CD4-positive, alpha-beta memory T cell (primary cell): ENCODE measurements at regions of chr16 and their contacts with region 1.

Region 1: GRCh38 chr16:9090960-9091866 is at the start of gene HAPSTR1:
- DNase-seq: peak; percentile 97 to 100 (median 100)
- H3K4me3 ChIP-seq: peak within 1 kb of the TSS; percentile 69 to 98
- H3K4me3 Mint-ChIP-seq: peak within 1 kb of the TSS; percentile 96 to 100 (median 99)
- H3K27ac ChIP-seq: peak within 1 kb of the TSS; percentile 93
- H3K27ac Mint-ChIP-seq: peak within 1 kb of the TSS; percentile 96 to 99 (median 98)
- H3K4me1 ChIP-seq: peaks cover 43% of the 10 kb centered on the region
- H3K4me1 Mint-ChIP-seq: peaks cover 30 to 53% (median 35%) of the 10 kb centered on the region in 4 donors
- H3K27me3 ChIP-seq: no peaks in the 10 kb centered on the region
- H3K27me3 Mint-ChIP-seq: no peaks in the 10 kb centered on the region
- total RNA-seq, gene HAPSTR1: 89.6 to 90.5 TPM

Region 2: DNA sequence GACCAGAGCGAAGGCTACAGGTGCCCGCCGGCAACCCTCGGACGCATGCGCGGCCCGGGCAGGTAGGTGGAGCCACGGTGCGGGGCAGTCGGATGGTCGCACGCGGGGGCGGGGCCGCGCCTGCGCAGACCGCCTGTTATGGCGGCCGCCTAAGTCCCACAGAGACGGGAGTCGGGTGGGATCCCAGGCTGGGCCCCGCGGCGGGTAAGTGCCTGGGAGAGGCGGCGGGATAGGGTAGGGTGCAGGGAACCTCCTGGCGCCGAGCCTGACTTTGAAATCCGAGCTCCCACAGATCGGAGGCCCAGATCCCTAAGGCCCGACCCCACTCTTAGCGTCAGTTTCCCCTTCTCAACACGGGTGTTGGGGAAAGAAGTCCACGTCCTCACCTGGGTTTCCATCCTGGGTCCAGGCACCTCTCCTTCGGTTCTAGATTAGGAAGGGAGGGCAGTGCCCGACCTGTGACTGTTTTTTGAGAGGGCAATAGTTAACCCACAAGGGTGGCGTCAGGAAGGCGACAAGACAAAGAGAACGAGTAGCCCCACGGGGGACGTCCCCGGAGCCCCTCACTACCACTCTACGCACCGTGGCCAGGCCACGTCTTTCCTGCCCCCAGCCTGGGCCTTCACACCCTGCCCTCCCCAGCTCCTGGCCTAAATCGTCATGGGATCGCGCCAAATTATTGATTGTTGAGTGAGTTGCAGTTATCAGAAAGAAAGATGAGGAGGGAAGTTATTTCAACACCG is 469.5 kb before region 1 on chr16 and contains the start of gene METTL22:
- CTCF ChIA-PET with region 1: no interaction called
- POLR2A ChIA-PET with region 1: interaction called, 5 read pairs
- intact Hi-C with region 1: loop called (anchors 10 kb)
- DNase-seq: peak; percentile 87 to 90 (median 90)
- H3K4me3 ChIP-seq: peak within 1 kb of the TSS; percentile 71 to 96
- H3K4me3 Mint-ChIP-seq: peak within 1 kb of the TSS; percentile 89 to 98 (median 94)
- H3K27ac ChIP-seq: peak within 1 kb of the TSS; percentile 92
- H3K27ac Mint-ChIP-seq: peak within 1 kb of the TSS; percentile 77 to 94 (median 91)
- H3K4me1 ChIP-seq: peaks cover 15% of the 10 kb centered on the region
- H3K4me1 Mint-ChIP-seq: peaks cover 11 to 32% (median 15%) of the 10 kb centered on the region in 4 donors
- H3K27me3 ChIP-seq: no peaks in the 10 kb centered on the region
- H3K27me3 Mint-ChIP-seq: peaks cover 0 to 5% of the 10 kb centered on the region in 2 donors
- total RNA-seq, gene METTL22: 42.9 to 49.8 TPM

Region 3: DNA sequence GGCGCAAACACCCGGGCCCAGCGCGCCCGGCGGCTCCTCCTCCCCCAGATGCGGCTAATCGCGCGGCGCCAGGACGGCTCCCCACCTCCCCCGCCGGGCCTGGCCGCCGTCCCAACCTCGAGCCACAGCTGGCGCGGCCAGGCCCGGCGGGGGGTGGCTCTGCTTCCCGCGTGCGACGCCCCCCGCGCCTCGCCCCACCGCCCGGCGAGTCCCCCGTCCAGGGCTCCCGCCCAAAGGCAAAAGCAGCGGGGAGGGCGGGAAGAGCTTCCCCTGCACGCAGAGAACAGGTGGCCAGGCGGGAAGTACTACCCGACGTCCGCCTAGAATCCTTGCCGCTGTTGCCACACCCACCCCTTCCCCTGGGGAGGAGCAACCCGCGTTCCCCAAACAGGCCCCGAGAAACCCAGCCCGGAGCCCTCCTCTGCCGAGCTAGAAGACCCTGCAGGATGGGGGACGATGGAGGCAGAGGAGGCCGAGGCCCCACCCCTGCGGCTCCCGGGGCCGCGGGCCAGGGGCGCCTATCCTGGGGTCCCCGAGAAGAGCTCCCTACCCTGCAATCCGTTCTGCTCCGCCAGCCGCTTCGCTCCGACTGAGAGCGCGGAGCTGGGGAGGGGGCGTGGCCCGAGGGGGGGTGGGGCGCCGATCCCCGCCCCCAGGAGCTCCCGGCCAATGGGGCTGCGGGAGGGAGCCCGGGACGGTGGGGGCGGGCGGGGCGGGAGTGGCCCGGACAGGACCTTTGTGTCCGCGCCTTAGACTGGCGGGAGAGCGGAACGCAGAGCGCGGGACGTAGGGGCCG is 222.6 kb before region 1 on chr16 and contains the start of gene CARHSP1:
- CTCF ChIA-PET with region 1: no interaction called
- POLR2A ChIA-PET with region 1: interaction called, 36 read pairs
- intact Hi-C with region 1: loop called (anchors 1 kb)
- DNase-seq: peak; percentile 71 to 80 (median 77)
- H3K4me3 ChIP-seq: peak within 1 kb of the TSS; percentile 54 to 81
- H3K4me3 Mint-ChIP-seq: peak within 1 kb of the TSS; percentile 93 to 97 (median 94)
- H3K27ac ChIP-seq: peak within 1 kb of the TSS; percentile 54
- H3K27ac Mint-ChIP-seq: peak within 1 kb of the TSS; percentile 85 to 97 (median 93)
- H3K4me1 ChIP-seq: peaks cover 54% of the 10 kb centered on the region
- H3K4me1 Mint-ChIP-seq: peaks cover 25 to 57% (median 45%) of the 10 kb centered on the region in 4 donors
- H3K27me3 ChIP-seq: no peaks in the 10 kb centered on the region
- H3K27me3 Mint-ChIP-seq: no peaks in the 10 kb centered on the region
- total RNA-seq, gene CARHSP1: 39.3 to 43.2 TPM

Region 4: GRCh38 chr16:8963825-8964441 is 127.3 kb before region 1 on chr16 and contains the start of gene USP7:
- CTCF ChIA-PET with region 1: no interaction called
- POLR2A ChIA-PET with region 1: interaction called, 21 read pairs
- intact Hi-C with region 1: loop called (anchors 1 kb)
- DNase-seq: peak; percentile 91 to 92 (median 91)
- H3K4me3 ChIP-seq: peak within 1 kb of the TSS; percentile 51 to 67
- H3K4me3 Mint-ChIP-seq: peak within 1 kb of the TSS; percentile 86 to 98 (median 94)
- H3K27ac ChIP-seq: peak within 1 kb of the TSS; percentile 65
- H3K27ac Mint-ChIP-seq: peak within 1 kb of the TSS; percentile 6 to 98 (median 82)
- H3K4me1 ChIP-seq: peaks cover 38% of the 10 kb centered on the region
- H3K4me1 Mint-ChIP-seq: peaks cover 32 to 47% (median 37%) of the 10 kb centered on the region in 4 donors
- H3K27me3 ChIP-seq: no peaks in the 10 kb centered on the region
- H3K27me3 Mint-ChIP-seq: no peaks in the 10 kb centered on the region
- total RNA-seq, gene USP7: 194 to 206 TPM

Region 5: DNA sequence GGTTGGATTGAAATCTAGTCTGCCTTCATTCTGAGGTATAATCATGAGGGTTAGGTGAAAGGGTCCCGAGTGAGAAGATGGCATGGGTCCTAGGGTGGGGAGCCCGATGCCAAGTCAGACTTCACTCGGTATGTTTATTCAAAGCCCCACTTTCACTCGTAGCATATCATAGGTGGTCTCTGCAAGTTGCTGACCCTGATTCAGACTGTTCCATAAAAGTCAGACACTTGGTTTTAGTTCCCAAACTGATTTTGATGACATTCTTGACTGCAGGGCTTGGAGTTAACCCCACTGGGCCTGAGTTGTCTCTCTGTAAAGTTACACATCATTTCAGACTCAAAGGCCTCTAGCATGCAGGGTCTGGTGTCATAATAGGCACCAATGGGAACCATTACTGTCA is 18.0 kb after region 1 on chr16:
- CTCF ChIA-PET with region 1: no interaction called
- POLR2A ChIA-PET with region 1: interaction called, 76 read pairs
- intact Hi-C with region 1: loop called (anchors 2 kb)
- DNase-seq: no peak
- H3K4me3 ChIP-seq: no peak overlapping the region
- H3K4me3 Mint-ChIP-seq: peak overlapping the region in 7 of 8 donors; percentile 34 to 79 (median 57)
- H3K27ac ChIP-seq: no peak overlapping the region
- H3K27ac Mint-ChIP-seq: peak overlapping the region in 6 of 7 donors; percentile 5 to 83 (median 68)
- H3K4me1 ChIP-seq: peaks cover 99% of the 10 kb centered on the region
- H3K4me1 Mint-ChIP-seq: peaks cover 73 to 98% (median 88%) of the 10 kb centered on the region in 4 donors
- H3K27me3 ChIP-seq: no peaks in the 10 kb centered on the region
- H3K27me3 Mint-ChIP-seq: no peaks in the 10 kb centered on the region

Region 6: GRCh38 chr16:9134739-9135138 is 43.5 kb after region 1 on chr16:
- CTCF ChIA-PET with region 1: interaction called, 4 read pairs
- POLR2A ChIA-PET with region 1: interaction called, 10 read pairs
- intact Hi-C with region 1: loop called (anchors 5 kb)
- DNase-seq: peak in 4 of 5 donors; percentile 38 to 46 (median 46)
- H3K4me3 ChIP-seq: no peak overlapping the region
- H3K4me3 Mint-ChIP-seq: peak overlapping the region in 1 of 8 donors; percentile 62
- H3K27ac ChIP-seq: no peak overlapping the region
- H3K27ac Mint-ChIP-seq: peak overlapping the region in 4 of 7 donors; percentile 39 to 82 (median 55)
- H3K4me1 ChIP-seq: peaks cover 18% of the 10 kb centered on the region
- H3K4me1 Mint-ChIP-seq: peaks cover 9 to 26% (median 19%) of the 10 kb centered on the region in 4 donors
- H3K27me3 ChIP-seq: no peaks in the 10 kb centered on the region
- H3K27me3 Mint-ChIP-seq: peaks cover 0 to 2% of the 10 kb centered on the region in 2 donors

Region 7: GRCh38 chr16:10743610-10744393 is 1652.6 kb after region 1 on chr16 and contains the start of gene NUBP1:
- CTCF ChIA-PET with region 1: no interaction called
- POLR2A ChIA-PET with region 1: interaction called, 16 read pairs
- intact Hi-C with region 1: loop called (anchors 1 kb)
- DNase-seq: peak; percentile 98 to 100 (median 98)
- H3K4me3 ChIP-seq: peak within 1 kb of the TSS; percentile 63 to 81
- H3K4me3 Mint-ChIP-seq: peak within 1 kb of the TSS; percentile 90 to 97 (median 95)
- H3K27ac ChIP-seq: peak within 1 kb of the TSS; percentile 92
- H3K27ac Mint-ChIP-seq: peak within 1 kb of the TSS; percentile 93 to 100 (median 99)
- H3K4me1 ChIP-seq: peaks cover 19% of the 10 kb centered on the region
- H3K4me1 Mint-ChIP-seq: peaks cover 16 to 30% (median 24%) of the 10 kb centered on the region in 4 donors
- H3K27me3 ChIP-seq: no peaks in the 10 kb centered on the region
- H3K27me3 Mint-ChIP-seq: no peaks in the 10 kb centered on the region
- total RNA-seq, gene NUBP1: 23.5 to 28.4 TPM